ENCODE measurements at regions of chr6 and their contacts with region 1.

Region 1: DNA sequence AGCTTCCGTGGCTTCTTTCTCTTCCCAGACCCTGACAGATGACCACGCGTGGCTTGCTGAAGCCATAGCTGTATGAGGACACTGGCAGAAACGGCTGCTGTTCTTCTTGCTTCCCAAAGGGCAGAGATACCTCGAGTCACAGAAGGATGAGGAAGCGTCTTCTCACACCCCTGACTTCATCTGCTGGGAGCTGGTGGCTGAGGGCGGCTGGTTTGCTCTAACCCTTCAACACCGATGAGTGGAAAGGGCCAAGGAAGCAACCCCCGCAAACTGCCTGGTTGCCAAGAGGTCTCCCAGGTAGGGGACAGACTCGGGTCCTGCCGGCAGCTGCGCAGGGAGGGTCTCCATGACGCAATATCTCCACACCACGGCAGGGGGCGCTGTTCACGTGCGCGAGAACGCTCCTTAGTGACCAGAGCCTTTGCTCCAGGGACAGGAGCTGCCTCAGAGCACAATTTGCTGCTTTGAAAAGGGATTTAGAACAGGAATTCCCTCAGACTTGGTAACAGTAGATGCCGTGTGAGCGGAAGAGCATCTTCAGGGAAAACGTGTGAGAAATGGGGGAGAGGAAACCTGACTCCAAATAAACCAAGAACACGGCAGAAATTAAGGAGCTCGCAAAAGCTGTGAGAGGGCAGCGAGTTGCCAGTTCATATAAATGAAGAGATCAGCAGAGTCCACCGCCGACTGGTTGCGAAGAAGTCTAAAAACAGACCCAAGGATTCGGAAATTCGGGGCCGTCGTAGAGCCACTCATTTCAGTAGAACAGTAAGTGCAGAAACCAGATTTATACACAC is 80.2 kb downstream of the ERMARD start:
- H3K4me3 ChIP-seq: no peak overlapping the region
- H3K27ac ChIP-seq: no peak overlapping the region
- H3K4me1 ChIP-seq: no peaks in the 10 kb centered on the region
- CTCF ChIP-seq: peak; percentile 80

Region 2: DNA sequence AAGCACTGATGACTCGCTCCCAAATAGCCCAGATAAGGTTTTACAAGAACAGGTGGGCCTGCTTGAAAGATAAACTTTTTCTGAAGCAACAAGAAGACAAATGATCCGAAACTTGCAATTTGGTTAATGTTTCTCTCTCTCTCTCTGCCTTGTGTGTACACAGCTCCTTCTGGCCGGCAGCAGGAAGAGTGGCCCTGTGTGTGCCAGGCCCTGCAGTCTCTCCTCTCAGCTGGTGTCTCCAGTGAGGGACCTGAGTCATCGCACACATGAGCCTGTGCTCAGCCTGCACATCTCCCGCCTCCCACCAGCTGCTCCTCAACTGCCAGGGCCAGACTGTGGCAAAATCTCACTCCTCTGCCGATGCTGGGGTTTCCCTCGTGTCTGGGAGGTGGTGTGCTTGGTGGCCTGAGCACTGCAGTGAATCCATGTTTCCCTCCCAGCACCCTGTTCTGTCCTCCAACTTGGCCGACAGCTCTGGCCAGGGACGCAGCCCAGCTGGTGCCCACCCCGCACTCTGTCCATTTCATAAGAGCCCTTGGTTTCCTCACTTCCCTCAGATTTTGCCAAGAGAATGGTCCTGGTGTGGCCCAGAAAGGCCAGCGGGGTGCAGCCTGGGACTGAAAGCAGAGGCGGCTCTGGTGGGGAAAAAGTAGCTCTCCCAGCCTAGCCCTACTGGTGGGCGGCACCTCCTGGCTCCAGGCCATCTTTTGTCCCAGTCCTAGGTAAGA is 30.8 kb before region 1 on chr6:
- CTCF ChIA-PET with region 1: interaction called, 14 read pairs
- POLR2A ChIA-PET with region 1: no interaction called
- H3K4me3 ChIP-seq: no peak overlapping the region
- H3K27ac ChIP-seq: peak overlapping the region; percentile 59; the same call in 1 of the 2 replicates
- H3K4me1 ChIP-seq: peaks cover 19% of the 10 kb centered on the region
- CTCF ChIP-seq: no peak

Region 3: DNA sequence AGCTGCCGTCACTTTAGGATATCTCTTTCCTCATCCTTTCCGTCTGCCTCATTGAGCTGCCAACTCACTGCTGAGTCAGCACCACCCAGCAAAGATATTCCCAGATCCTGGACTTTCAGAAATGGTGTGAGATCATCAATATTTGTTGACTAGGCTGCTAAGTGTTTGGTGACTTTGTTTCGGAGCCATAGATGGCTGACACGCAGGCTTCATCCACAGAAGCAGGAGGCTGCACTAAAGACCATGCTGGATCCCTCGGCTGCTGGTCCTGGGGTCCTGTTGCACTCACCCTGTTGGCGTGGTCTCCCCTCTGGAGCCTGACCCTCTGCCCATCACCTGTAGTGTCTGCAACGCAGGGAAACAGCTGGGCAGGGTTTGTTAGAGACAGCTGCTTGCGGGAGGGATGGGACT is 16.3 kb after region 1 on chr6:
- CTCF ChIA-PET with region 1: interaction called, 32 read pairs
- POLR2A ChIA-PET with region 1: no interaction called
- H3K4me3 ChIP-seq: no peak overlapping the region
- H3K27ac ChIP-seq: no peak overlapping the region
- H3K4me1 ChIP-seq: no peaks in the 10 kb centered on the region
- CTCF ChIP-seq: no peak

Region 4: DNA sequence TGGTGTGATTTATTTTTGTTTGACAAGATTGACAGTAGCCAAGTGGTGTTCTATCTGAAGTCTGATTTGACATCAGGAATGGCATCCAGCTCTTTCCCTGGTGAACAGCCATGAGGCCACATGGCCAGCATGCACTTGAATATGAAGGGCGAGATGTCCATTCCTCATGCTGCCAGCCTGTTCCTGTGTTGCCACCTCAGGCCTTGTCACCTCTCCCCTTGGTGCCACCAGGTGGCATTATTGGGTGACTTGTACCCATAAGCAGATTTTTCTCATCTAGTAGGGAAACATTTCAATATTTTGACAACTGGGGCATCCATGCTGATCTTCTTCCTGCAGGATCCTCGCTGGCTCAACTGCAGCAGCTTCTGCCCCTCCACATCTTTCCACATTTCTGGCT is 118.9 kb after region 1 on chr6:
- CTCF ChIA-PET with region 1: interaction called, 10 read pairs
- POLR2A ChIA-PET with region 1: no interaction called
- H3K4me3 ChIP-seq: no peak overlapping the region
- H3K27ac ChIP-seq: no peak overlapping the region
- H3K4me1 ChIP-seq: no peaks in the 10 kb centered on the region
- CTCF ChIP-seq: no peak

Region 5: DNA sequence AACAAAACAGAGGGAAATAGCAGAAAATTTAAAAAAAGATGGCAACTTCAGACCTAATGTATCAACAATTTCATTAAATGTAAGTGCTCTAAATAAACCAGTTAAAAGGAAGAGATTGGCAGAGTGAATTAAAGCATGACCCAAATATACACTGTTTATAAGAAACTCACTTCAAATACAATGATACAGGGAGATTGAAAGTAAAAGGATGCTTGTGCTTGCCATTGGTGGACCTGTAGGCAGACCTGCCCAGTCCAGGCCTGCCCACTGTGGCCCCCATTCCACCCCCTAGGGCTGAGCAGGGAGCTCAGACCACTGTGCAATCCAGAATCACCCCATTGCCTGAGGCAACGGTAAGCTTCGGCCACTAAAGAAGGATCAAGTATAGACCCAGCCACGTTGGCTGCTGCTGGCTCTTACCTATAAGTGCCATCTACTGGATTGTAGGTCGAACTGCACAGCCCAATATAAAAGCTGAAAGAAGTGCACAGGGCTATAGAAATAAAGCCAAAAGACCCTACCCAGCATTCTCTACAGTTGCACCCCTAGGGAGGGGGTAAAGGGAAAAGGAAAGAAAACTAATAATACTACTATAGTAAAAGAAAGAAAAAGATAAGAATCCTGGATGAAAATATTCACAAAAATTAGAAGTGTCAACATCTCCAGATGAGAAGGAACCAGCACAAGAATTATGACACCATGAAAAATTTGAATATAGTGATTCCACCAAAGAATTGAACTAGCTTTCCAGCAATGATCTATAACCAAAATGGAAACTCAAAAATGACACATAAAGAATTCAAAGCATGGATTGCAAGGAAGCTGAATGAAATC is 685.4 kb after region 1 on chr6:
- CTCF ChIA-PET with region 1: interaction called, 40 read pairs
- POLR2A ChIA-PET with region 1: no interaction called
- H3K4me3 ChIP-seq: no peak overlapping the region
- H3K27ac ChIP-seq: no peak overlapping the region
- H3K4me1 ChIP-seq: no peaks in the 10 kb centered on the region
- CTCF ChIP-seq: peak; percentile 61; the same call in 1 of the 2 replicates

Measured in HEK293 (cell line).